GM12878 (cell line): ENCODE measurements at regions of chr17 and their contacts with region 1.

Region 1: DNA sequence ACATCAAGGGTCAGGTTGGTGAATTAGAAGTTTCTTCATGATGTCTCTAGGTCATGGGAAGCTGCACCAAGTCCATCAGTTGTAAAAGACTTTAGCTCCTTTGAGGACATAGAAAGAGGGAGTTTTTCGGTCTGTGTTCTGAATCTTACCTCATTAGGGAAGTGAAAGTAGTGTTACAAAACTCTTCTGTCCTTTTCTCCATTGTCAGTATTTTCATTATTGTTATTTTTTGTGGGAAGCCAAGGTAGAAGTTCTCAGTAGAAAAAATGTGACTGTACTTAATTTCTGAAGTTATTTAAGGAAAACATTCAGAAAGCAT is 24.2 kb downstream of the MAP3K3 start:
- DNase-seq: peak; percentile 59
- ATAC-seq: peak; percentile 96
- H3K4me3 ChIP-seq: no peak overlapping the region
- H3K27ac ChIP-seq: peak overlapping the region; percentile 85
- H3K4me1 ChIP-seq: peaks cover 26% of the 10 kb centered on the region
- H3K27me3 ChIP-seq: no peaks in the 10 kb centered on the region
- CTCF ChIP-seq: no peak
- EP300 ChIP-seq: peak in 1 of 2 experiments; percentile 69; a peak in 1 of 4 replicates
- POLR2A ChIP-seq: no peak
- RAD21 ChIP-seq: no peak

Region 2: DNA sequence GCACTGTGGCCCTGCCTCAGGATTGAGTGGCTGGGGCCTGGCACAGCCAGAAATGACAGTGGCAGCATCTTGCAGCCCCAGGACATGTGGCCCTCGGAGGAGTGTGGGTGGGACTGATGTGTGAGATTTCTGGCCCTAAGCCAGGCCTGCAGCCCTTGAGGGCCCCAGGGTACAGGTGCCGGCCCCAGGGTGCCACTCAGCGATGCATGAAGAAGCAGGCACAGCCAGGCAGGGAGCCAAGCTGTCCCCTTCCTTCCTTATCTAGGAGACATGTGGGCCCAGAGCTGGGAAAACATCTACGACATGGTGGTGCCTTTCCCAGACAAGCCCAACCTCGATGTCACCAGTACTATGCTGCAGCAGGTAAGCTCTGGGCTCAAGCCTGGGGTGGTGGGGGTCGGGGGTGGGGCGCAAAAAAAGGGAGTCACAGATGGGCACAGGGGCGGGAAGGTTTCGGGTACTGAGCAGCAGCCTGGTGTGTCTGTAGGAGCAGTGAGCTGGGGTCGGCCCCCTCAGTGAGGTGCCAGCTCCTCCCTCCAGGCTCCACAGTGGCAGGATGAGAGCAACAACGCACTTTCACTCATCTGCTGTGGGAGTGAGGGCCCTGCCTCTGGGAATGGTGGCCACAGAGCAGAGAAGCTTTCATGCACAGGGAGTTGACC is 165.5 kb before region 1 on chr17:
- CTCF ChIA-PET with region 1: no interaction called
- POLR2A ChIA-PET with region 1: no interaction called
- RAD21 ChIA-PET with region 1: no interaction called
- SMC1A ChIA-PET with region 1: no interaction called
- in situ Hi-C with region 1: no loop called
- intact Hi-C with region 1: no loop called
- DNase-seq: no peak
- ATAC-seq: no peak
- H3K4me3 ChIP-seq: no peak overlapping the region
- H3K27ac ChIP-seq: no peak overlapping the region
- H3K4me1 ChIP-seq: peaks cover 5% of the 10 kb centered on the region
- H3K27me3 ChIP-seq: peaks cover 7 to 8% of the 10 kb centered on the region in 2 experiments
- CTCF ChIP-seq: no peak
- EP300 ChIP-seq: no peak
- POLR2A ChIP-seq: no peak
- RAD21 ChIP-seq: no peak

Region 3: DNA sequence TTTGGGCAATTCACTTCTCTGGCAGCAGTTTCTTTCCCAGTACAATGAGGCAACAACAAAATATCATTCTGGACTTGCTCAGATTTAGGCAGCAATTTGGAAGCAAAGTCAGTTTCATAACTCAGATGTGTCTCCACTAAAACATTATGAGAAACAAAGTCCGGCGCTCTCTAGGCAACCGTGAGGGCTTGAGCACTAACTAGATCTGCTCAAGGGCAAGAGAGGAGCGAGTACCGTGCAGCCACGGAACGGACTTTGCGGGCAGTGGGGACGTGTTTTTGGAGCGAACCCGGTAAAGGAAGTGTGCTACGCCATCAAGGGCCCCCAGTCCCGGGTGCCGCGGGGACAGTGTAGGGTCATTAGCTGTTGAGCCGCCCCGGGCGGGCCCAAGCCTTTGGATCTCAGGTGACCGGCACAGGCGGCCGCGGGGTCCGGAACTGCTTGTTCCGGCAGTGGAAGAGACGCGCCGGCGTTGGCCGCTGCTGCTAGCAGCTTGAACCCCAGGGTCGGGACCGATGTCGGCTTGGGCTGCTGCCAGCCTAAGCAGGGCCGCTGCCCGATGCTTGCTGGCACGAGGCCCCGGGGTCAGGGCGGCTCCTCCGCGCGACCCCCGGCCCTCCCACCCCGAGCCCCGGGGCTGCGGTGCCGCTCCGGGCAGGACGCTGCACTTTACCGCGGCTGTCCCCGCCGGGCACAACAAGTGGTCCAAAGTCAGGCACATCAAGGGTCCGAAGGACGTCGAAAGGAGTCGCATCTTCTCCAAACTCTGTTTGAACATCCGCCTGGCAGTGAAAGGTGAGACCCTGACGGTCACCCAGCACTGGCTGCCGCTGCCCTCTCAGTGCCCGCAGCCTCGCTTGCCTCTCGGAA is 45.6 kb before region 1 on chr17 and contains the start of gene TACO1:
- CTCF ChIA-PET with region 1: no interaction called
- POLR2A ChIA-PET with region 1: no interaction called
- RAD21 ChIA-PET with region 1: interaction called, 3 read pairs
- SMC1A ChIA-PET with region 1: no interaction called
- in situ Hi-C with region 1: no loop called
- intact Hi-C with region 1: loop called (anchors 2 kb)
- DNase-seq: peak; percentile 48
- ATAC-seq: peak; percentile 95
- H3K4me3 ChIP-seq: peak within 1 kb of the TSS; percentile 86
- H3K27ac ChIP-seq: peak within 1 kb of the TSS; percentile 59
- H3K4me1 ChIP-seq: no peaks in the 10 kb centered on the region
- H3K27me3 ChIP-seq: no peaks in the 10 kb centered on the region
- CTCF ChIP-seq: no peak
- EP300 ChIP-seq: no peak
- POLR2A ChIP-seq: peak; percentile 79
- RAD21 ChIP-seq: no peak
- polyA plus RNA-seq, gene TACO1: 8.5 to 16.1 TPM

Region 4: GRCh38 chr17:63621766-63622519 is 24.5 kb before region 1 on chr17 and contains the start of gene MAP3K3:
- CTCF ChIA-PET with region 1: interaction called, 4 read pairs
- POLR2A ChIA-PET with region 1: interaction called, 7 read pairs
- RAD21 ChIA-PET with region 1: interaction called, 11 read pairs
- SMC1A ChIA-PET with region 1: interaction called, 19 read pairs
- in situ Hi-C with region 1: no loop called
- intact Hi-C with region 1: no loop called
- DNase-seq: peak; percentile 99
- ATAC-seq: peak; percentile 94
- H3K4me3 ChIP-seq: peak within 1 kb of the TSS; percentile 99
- H3K27ac ChIP-seq: peak within 1 kb of the TSS; percentile 67
- H3K4me1 ChIP-seq: peaks cover 5% of the 10 kb centered on the region; the same call in 1 of the 2 replicates
- H3K27me3 ChIP-seq: no peaks in the 10 kb centered on the region
- CTCF ChIP-seq: 0 out of 6 replicates have a peak, but pooled peaks of 1 of the 3 experiments have one; percentile 17
- EP300 ChIP-seq: no peak
- POLR2A ChIP-seq: peak; percentile 92
- RAD21 ChIP-seq: no peak
- polyA plus RNA-seq, gene MAP3K3: 1.6 to 2.0 TPM

Region 5: GRCh38 chr17:63688396-63689020 is 42.1 kb after region 1 on chr17:
- CTCF ChIA-PET with region 1: interaction called, 3 read pairs
- POLR2A ChIA-PET with region 1: interaction called, 3 read pairs
- RAD21 ChIA-PET with region 1: interaction called, 7 read pairs
- SMC1A ChIA-PET with region 1: interaction called, 15 read pairs
- in situ Hi-C with region 1: no loop called
- intact Hi-C with region 1: no loop called
- DNase-seq: no peak
- ATAC-seq: peak; percentile 82
- H3K4me3 ChIP-seq: no peak overlapping the region
- H3K27ac ChIP-seq: no peak overlapping the region
- H3K4me1 ChIP-seq: no peaks in the 10 kb centered on the region
- H3K27me3 ChIP-seq: no peaks in the 10 kb centered on the region
- CTCF ChIP-seq: peak in 1 of 3 experiments; percentile 28; a peak in 1 of 6 replicates
- EP300 ChIP-seq: no peak
- POLR2A ChIP-seq: no peak
- RAD21 ChIP-seq: peak; percentile 35; the same call in 1 of the 2 replicates

Region 6: DNA sequence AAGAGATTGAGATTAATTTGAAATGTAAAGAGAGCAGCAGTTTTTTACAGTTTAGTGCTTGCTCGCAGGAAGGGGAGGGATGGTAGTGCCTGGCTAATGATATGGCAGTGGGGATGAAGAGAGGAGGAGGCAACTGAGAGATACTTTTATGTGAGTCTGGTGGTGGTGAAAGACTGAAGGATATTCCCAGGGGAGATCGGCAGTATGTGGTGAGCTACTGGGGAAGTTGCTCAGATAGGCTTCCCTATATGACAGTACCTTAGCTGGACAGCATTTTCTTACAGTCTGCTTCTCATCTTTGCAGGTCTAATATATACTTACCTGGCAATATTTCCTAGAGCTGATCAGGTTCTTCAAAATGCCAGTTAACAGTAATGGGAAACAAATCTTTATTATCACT is 869.0 kb after region 1 on chr17:
- CTCF ChIA-PET with region 1: no interaction called
- POLR2A ChIA-PET with region 1: no interaction called
- RAD21 ChIA-PET with region 1: no interaction called
- SMC1A ChIA-PET with region 1: no interaction called
- in situ Hi-C with region 1: no loop called
- intact Hi-C with region 1: no loop called
- DNase-seq: no peak
- ATAC-seq: peak; percentile 78
- H3K4me3 ChIP-seq: no peak overlapping the region
- H3K27ac ChIP-seq: no peak overlapping the region
- H3K4me1 ChIP-seq: no peaks in the 10 kb centered on the region
- H3K27me3 ChIP-seq: no peaks in the 10 kb centered on the region
- CTCF ChIP-seq: no peak
- EP300 ChIP-seq: no peak
- POLR2A ChIP-seq: no peak
- RAD21 ChIP-seq: no peak